ENCODE measurements at regions of chr13 and their contacts with region 1.

Region 1: GRCh38 chr13:45055198-45055901 is 65.0 kb upstream of the GTF2F2 start:
- DNase-seq: peak; percentile 67
- H3K4me3 ChIP-seq: peak overlapping the region; percentile 8
- H3K27ac ChIP-seq: peak overlapping the region; percentile 92
- H3K27me3 ChIP-seq: no peaks in the 10 kb centered on the region
- CTCF ChIP-seq: no peak

Region 2: GRCh38 chr13:44854313-44855060 is 200.9 kb before region 1 on chr13:
- CTCF ChIA-PET with region 1: no interaction called
- POLR2A ChIA-PET with region 1: no interaction called
- DNase-seq: no peak
- H3K4me3 ChIP-seq: no peak overlapping the region
- H3K27ac ChIP-seq: no peak overlapping the region
- H3K27me3 ChIP-seq: peaks cover 2% of the 10 kb centered on the region
- CTCF ChIP-seq: no peak

Region 3: DNA sequence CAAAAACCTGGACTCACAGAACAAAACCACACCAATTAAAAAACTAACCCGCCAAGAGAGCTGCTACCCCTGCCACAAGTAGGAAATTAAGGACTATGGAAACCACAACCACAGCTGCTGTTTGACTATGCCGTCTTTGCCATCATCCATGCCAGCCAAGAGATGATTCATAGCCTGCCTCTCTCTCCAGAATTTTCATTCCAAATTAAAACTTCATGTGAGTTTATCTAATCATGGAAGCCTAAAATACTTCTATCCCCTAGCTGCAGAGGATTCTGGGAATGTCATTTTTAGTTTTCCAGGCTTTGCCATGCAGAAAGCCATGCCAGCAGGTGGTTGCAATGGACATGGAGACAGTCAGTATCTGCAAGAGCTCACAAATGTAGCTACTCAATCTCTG is 37.3 kb after region 1 on chr13:
- CTCF ChIA-PET with region 1: interaction called, 3 read pairs
- POLR2A ChIA-PET with region 1: interaction called, 12 read pairs
- DNase-seq: no peak
- H3K4me3 ChIP-seq: no peak overlapping the region
- H3K27ac ChIP-seq: no peak overlapping the region
- H3K27me3 ChIP-seq: no peaks in the 10 kb centered on the region
- CTCF ChIP-seq: no peak

Measured in AG04450 (cell line).